CD8-positive, alpha-beta T cell (primary cell): ENCODE measurements at regions of chr1 and their contacts with region 1.

Region 1: DNA sequence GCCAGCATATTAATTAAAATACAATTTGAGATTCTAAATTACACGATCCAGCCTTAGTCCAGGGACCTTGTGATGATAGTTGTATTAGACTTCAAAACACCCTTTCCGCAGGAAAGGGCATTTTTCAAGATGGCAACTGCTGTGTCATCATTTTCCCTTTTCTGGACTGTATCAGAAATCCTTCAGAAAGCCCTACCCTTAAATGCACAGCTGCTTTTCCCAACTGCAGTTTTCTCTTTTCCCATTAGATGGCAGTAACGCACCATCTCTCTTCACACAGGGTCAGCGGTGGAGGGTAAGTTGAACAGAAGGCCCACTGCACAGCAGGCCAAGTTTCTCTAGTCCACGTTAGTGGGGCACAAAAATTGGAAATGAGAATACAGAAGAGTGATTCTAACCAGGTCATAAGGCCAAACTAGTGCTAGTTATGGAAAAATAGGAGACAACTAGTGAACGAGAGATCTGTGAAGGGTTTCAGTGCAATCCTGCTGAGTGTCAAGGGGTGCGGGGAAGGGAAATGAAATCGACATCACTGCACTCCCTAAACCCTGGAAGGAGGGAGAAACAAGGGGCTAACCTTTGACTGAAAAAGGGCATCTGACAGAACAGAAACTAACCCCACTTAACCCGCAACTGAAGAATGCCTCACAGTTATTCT is 22.1 kb upstream of the TDRD10 start:
- DNase-seq: peak in 8 of 9 experiments; percentile 12 to 80 (median 58)
- ATAC-seq: peak; percentile 91
- H3K4me3 ChIP-seq: no peak overlapping the region
- H3K4me3 Mint-ChIP-seq: no peak overlapping the region
- H3K27ac ChIP-seq: no peak overlapping the region
- H3K27ac Mint-ChIP-seq: no peak overlapping the region
- H3K4me1 ChIP-seq: peaks cover 3% of the 10 kb centered on the region
- H3K4me1 Mint-ChIP-seq: peaks cover 9% of the 10 kb centered on the region
- H3K27me3 ChIP-seq: no peaks in the 10 kb centered on the region
- H3K27me3 Mint-ChIP-seq: peaks cover 3% of the 10 kb centered on the region
- CTCF ChIP-seq: peak; percentile 98

Region 2: GRCh38 chr1:154352581-154353459 is 127.1 kb before region 1 on chr1:
- CTCF ChIA-PET with region 1: interaction called, 14 read pairs
- POLR2A ChIA-PET with region 1: no interaction called
- intact Hi-C with region 1: loop called in 1 of 2 experiments (anchors 5 kb)
- DNase-seq: peak in 7 of 9 experiments; percentile 21 to 72 (median 55)
- ATAC-seq: peak; percentile 73
- H3K4me3 ChIP-seq: peak overlapping the region; percentile 45 to 63
- H3K4me3 Mint-ChIP-seq: peak overlapping the region; percentile 91
- H3K27ac ChIP-seq: no peak overlapping the region
- H3K27ac Mint-ChIP-seq: peak overlapping the region; percentile 81
- H3K4me1 ChIP-seq: peaks cover 27% of the 10 kb centered on the region
- H3K4me1 Mint-ChIP-seq: peaks cover 44% of the 10 kb centered on the region
- H3K27me3 ChIP-seq: no peaks in the 10 kb centered on the region
- H3K27me3 Mint-ChIP-seq: no peaks in the 10 kb centered on the region
- CTCF ChIP-seq: no peak

Region 3: DNA sequence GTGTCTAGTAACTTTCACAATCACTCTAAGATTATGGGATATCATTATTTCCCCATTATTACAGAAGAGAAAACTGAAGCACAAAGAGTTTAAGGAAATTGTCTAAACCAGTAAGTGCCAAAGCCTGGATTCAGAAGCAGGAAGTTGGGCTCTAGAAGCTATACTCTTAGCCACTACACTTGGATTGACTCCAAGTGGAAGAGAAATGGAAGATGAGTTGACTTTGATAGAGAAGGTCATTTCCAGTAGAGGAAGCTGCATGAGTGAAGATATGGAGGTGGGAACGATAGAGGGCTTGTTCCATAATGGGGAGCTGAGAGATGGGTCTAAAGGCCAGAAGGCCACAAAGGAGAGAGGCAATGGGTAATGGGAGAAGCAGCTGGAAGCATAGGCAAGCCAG is 10.4 kb after region 1 on chr1:
- CTCF ChIA-PET with region 1: interaction called, 10 read pairs
- POLR2A ChIA-PET with region 1: no interaction called
- intact Hi-C with region 1: no loop called
- DNase-seq: no peak
- ATAC-seq: no peak
- H3K4me3 ChIP-seq: no peak overlapping the region
- H3K4me3 Mint-ChIP-seq: no peak overlapping the region
- H3K27ac ChIP-seq: no peak overlapping the region
- H3K27ac Mint-ChIP-seq: no peak overlapping the region
- H3K4me1 ChIP-seq: peaks cover 16% of the 10 kb centered on the region
- H3K4me1 Mint-ChIP-seq: peaks cover 26% of the 10 kb centered on the region
- H3K27me3 ChIP-seq: no peaks in the 10 kb centered on the region
- H3K27me3 Mint-ChIP-seq: no peaks in the 10 kb centered on the region
- CTCF ChIP-seq: no peak

Region 4: GRCh38 chr1:154546264-154547063 is 66.6 kb after region 1 on chr1:
- CTCF ChIA-PET with region 1: interaction called, 122 read pairs
- POLR2A ChIA-PET with region 1: interaction called, 4 read pairs
- intact Hi-C with region 1: loop called (anchors 1 kb)
- DNase-seq: peak; percentile 10 to 72 (median 52)
- ATAC-seq: peak; percentile 97
- H3K4me3 ChIP-seq: no peak overlapping the region
- H3K4me3 Mint-ChIP-seq: no peak overlapping the region
- H3K27ac ChIP-seq: no peak overlapping the region
- H3K27ac Mint-ChIP-seq: no peak overlapping the region
- H3K4me1 ChIP-seq: no peaks in the 10 kb centered on the region
- H3K4me1 Mint-ChIP-seq: peaks cover 15% of the 10 kb centered on the region
- H3K27me3 ChIP-seq: no peaks in the 10 kb centered on the region
- H3K27me3 Mint-ChIP-seq: peaks cover 3% of the 10 kb centered on the region
- CTCF ChIP-seq: peak; percentile 61

Region 5: GRCh38 chr1:154669464-154670282 is 189.8 kb after region 1 on chr1:
- CTCF ChIA-PET with region 1: interaction called, 6 read pairs
- POLR2A ChIA-PET with region 1: no interaction called
- intact Hi-C with region 1: loop called (anchors 1 to 10 kb)
- DNase-seq: peak; percentile 48 to 86 (median 74)
- ATAC-seq: peak; percentile 100
- H3K4me3 ChIP-seq: no peak overlapping the region
- H3K4me3 Mint-ChIP-seq: no peak overlapping the region
- H3K27ac ChIP-seq: no peak overlapping the region
- H3K27ac Mint-ChIP-seq: no peak overlapping the region
- H3K4me1 ChIP-seq: peaks cover 3% of the 10 kb centered on the region
- H3K4me1 Mint-ChIP-seq: no peaks in the 10 kb centered on the region
- H3K27me3 ChIP-seq: no peaks in the 10 kb centered on the region
- H3K27me3 Mint-ChIP-seq: no peaks in the 10 kb centered on the region
- CTCF ChIP-seq: peak; percentile 80

Region 6: DNA sequence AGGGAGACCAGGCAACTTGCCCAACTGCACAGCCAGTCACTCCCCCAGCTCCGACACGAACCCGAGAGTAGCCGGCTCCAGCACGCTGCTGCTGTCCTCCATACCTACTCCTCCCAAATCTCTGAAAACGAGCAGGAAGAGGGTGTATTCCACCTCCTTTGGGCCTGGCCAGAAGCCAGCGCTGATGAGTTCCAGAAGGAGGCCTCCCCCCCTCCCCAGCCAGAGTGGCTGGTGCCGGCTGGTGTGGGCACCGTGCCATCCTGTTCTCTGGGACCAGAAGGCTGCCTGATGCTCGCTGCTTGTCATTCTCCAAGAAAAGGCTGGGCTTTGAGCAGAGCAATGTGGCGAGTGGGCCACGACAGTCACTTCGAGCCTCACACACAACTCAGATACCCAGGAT is 368.0 kb after region 1 on chr1:
- CTCF ChIA-PET with region 1: no interaction called
- POLR2A ChIA-PET with region 1: no interaction called
- intact Hi-C with region 1: no loop called
- DNase-seq: no peak
- ATAC-seq: no peak
- H3K4me3 ChIP-seq: no peak overlapping the region
- H3K4me3 Mint-ChIP-seq: no peak overlapping the region
- H3K27ac ChIP-seq: no peak overlapping the region
- H3K27ac Mint-ChIP-seq: no peak overlapping the region
- H3K4me1 ChIP-seq: no peaks in the 10 kb centered on the region
- H3K4me1 Mint-ChIP-seq: no peaks in the 10 kb centered on the region
- H3K27me3 ChIP-seq: no peaks in the 10 kb centered on the region
- H3K27me3 Mint-ChIP-seq: no peaks in the 10 kb centered on the region
- CTCF ChIP-seq: no peak